IMR-90 (cell line): ENCODE measurements at regions of chrX and their contacts with region 1.

Region 1: GRCh38 chrX:154762523-154763289 is at the start of gene DKC1:
- DNase-seq: peak; percentile 94
- ATAC-seq: peak; percentile 97
- H3K4me3 ChIP-seq: peak within 1 kb of the TSS; percentile 81
- H3K27ac ChIP-seq: peak within 1 kb of the TSS; percentile 95
- H3K4me1 ChIP-seq: no peaks in the 10 kb centered on the region
- H3K27me3 ChIP-seq: no peaks in the 10 kb centered on the region
- CTCF ChIP-seq: peak; percentile 7; the same call in 1 of the 2 replicates
- POLR2A ChIP-seq: peak; percentile 70; the same call in 1 of the 2 replicates
- RAD21 ChIP-seq: no peak
- total RNA-seq, gene DKC1: 63.8 and 66.7 TPM in 2 replicates

Region 2: GRCh38 chrX:154800478-154801210 is 37.9 kb after region 1 on chrX:
- CTCF ChIA-PET with region 1: no interaction called
- POLR2A ChIA-PET with region 1: interaction called, 6 read pairs
- dilution Hi-C with region 1: no loop called
- in situ Hi-C with region 1: no loop called
- intact Hi-C with region 1: loop called (anchors 1 kb)
- DNase-seq: no peak
- ATAC-seq: no peak
- H3K4me3 ChIP-seq: no peak overlapping the region
- H3K27ac ChIP-seq: no peak overlapping the region
- H3K4me1 ChIP-seq: peaks cover 16% of the 10 kb centered on the region
- H3K27me3 ChIP-seq: no peaks in the 10 kb centered on the region
- CTCF ChIP-seq: no peak
- POLR2A ChIP-seq: no peak
- RAD21 ChIP-seq: no peak